Stomach (tissue), 19 donors: ENCODE measurements at regions of chr5 and their contacts with region 1.

Region 1: DNA sequence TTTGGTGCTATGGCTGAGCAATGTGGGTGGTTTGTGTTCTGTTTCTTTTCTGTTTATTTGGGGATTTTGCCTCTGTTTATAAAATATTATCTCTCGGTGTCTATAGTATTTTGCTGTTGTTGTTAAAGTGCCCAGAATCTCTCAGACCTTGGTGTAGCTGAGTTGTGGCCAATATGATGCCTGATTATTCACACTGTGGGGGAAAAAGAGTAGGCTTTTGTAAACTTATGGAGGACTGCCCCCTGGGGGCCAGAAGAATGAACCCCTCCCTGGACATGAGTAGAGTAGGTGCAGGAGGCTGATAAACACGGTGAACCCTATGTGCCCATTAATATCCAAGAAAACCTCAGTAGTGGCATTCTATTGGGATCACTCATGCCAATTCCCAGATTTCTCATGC is 49.0 kb upstream of the DPYSL3 start:
- DNase-seq: peak in 1 of 2 donors; percentile 76
- H3K4me3 ChIP-seq: no peak overlapping the region
- H3K27ac ChIP-seq: peak overlapping the region in 1 of 5 donors; percentile 7
- H3K4me1 ChIP-seq: peaks cover 0 to 11% (median 5%) of the 10 kb centered on the region in 4 donors
- H3K27me3 ChIP-seq: no peaks in the 10 kb centered on the region
- CTCF ChIP-seq: peak in 5 of 7 experiments; percentile 13 to 42 (median 33)
- EP300 ChIP-seq: no peak
- POLR2A ChIP-seq: no peak

Region 2: GRCh38 chr5:147453875-147454814 is 104.7 kb before region 1 on chr5:
- intact Hi-C with region 1: loop called (anchors 10 kb)
- DNase-seq: peak; percentile 75 to 97
- H3K4me3 ChIP-seq: peak overlapping the region; percentile 62 to 81 (median 74)
- H3K27ac ChIP-seq: peak overlapping the region; percentile 67 to 92 (median 83)
- H3K4me1 ChIP-seq: peaks cover 0 to 50% (median 31%) of the 10 kb centered on the region in 4 donors
- H3K27me3 ChIP-seq: peaks cover 0 to 40% (median 22%) of the 10 kb centered on the region in 3 donors
- CTCF ChIP-seq: peak in 5 of 7 experiments; percentile 86 to 94 (median 90)
- EP300 ChIP-seq: no peak
- POLR2A ChIP-seq: no peak

Region 3: DNA sequence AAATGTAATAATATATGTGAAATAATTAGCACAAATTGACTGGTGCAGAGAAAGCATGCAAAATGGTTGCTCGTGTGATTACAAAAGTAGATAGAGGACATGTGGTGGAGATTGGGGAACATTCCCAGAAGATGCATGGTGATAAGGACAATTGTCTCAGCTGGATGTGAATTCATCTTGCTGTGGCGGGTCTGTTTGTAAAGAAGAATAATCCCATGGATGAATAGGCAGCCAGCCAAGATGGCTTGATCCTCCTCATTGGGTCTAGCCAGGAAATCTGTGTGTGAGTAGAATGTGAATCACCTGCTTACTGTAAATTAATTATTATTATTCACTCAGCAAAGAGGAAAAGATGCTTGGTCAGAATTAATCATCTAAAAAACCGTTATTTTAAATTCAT is 36.4 kb before region 1 on chr5:
- intact Hi-C with region 1: no loop called
- DNase-seq: no peak
- H3K4me3 ChIP-seq: no peak overlapping the region
- H3K27ac ChIP-seq: no peak overlapping the region
- H3K4me1 ChIP-seq: no peaks in the 10 kb centered on the region
- H3K27me3 ChIP-seq: no peaks in the 10 kb centered on the region
- CTCF ChIP-seq: no peak
- EP300 ChIP-seq: no peak
- POLR2A ChIP-seq: no peak